KBM-7 (cell line): ENCODE measurements at regions of chr5 and their contacts with region 1.

Region 1: GRCh38 chr5:81749561-81750307 is 1.2 kb downstream of the SSBP2 start:
- DNase-seq: peak; percentile 54

Region 2: GRCh38 chr5:81233080-81233634 is 516.6 kb before region 1 on chr5 and contains the start of gene CKMT2:
- in situ Hi-C with region 1: no loop called
- DNase-seq: no peak

Region 3: DNA sequence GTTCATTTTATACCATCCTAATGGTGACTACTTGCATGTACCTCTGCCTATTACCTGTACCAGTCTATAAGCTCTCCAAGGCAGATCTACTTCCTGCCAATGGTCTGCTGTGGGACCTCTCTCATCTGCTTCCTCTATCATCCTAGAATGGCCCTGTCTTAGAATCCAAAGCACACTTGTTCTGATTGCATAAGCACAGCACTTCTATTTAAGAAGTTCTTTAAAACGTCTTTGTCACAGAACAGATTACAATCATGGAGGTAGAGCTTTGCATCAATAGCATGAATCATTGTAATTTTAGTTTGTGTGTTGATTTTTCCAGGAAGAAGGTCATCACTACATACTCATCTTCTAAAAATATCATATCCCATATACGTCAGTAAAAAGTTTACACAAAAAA is 224.0 kb before region 1 on chr5:
- in situ Hi-C with region 1: loop called (anchors 25 kb)
- DNase-seq: peak; percentile 31

Region 4: GRCh38 chr5:82137205-82137604 is 387.5 kb after region 1 on chr5:
- in situ Hi-C with region 1: no loop called
- DNase-seq: no peak

Region 5: DNA sequence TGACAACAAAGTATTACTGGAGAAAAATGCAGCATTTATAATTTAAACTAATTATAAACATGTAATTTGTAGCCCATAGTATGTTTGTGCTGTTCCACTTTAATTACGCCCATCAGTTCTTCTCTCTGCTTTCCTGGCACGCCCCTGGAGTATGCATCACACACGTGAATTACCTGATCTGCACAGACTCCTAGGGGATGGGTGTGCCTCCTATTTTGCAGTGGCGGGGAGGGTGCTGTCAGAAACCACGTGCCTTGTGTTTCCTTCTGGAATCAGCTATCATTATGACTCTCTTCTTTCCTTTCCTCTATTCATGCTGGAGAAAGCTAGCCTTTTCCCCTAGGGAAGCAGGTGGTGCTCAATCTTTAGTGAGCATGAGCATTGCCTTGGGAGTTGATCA is 485.1 kb after region 1 on chr5:
- in situ Hi-C with region 1: no loop called
- DNase-seq: no peak